ENCODE measurements at regions of chr12 and their contacts with region 1.

Region 1: DNA sequence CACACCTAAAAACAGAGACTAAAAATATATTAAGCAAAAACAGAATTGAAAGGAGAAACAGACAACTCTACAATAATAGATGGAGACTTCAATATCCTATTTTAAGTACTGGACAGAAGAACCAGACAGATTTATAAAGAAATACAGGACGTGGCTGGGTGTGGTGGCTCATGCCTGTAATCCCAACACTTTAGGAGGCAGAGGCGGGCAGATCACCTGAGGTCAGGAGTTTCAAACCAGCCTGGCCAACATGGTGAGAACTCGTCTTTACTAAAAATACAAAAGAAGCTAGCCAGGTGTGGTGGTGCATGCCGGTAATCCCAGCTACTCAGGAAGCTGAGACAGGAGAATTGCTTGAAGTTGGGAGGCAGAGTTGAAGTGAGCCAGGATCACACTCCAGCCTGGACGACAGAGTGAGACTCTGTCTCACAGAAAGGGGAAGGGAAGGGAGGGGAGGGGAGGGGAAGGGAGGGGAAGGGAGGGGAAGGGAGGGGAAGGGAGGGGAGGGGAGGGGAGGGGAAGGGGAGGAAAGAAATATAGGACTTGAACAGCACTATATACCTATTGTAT is 53.0 kb downstream of the CDK17 start:
- DNase-seq: no peak
- H3K4me3 Mint-ChIP-seq: peak overlapping the region; percentile 47
- H3K27ac Mint-ChIP-seq: peak overlapping the region; percentile 69
- H3K4me1 Mint-ChIP-seq: peaks cover 55% of the 10 kb centered on the region
- H3K27me3 Mint-ChIP-seq: no peaks in the 10 kb centered on the region

Region 2: GRCh38 chr12:95739561-95740313 is 607.5 kb before region 1 on chr12:
- CTCF ChIA-PET with region 1: no interaction called
- intact Hi-C with region 1: no loop called
- DNase-seq: no peak
- H3K4me3 Mint-ChIP-seq: no peak overlapping the region
- H3K27ac Mint-ChIP-seq: no peak overlapping the region
- H3K4me1 Mint-ChIP-seq: no peaks in the 10 kb centered on the region
- H3K27me3 Mint-ChIP-seq: peaks cover 3% of the 10 kb centered on the region

Region 3: DNA sequence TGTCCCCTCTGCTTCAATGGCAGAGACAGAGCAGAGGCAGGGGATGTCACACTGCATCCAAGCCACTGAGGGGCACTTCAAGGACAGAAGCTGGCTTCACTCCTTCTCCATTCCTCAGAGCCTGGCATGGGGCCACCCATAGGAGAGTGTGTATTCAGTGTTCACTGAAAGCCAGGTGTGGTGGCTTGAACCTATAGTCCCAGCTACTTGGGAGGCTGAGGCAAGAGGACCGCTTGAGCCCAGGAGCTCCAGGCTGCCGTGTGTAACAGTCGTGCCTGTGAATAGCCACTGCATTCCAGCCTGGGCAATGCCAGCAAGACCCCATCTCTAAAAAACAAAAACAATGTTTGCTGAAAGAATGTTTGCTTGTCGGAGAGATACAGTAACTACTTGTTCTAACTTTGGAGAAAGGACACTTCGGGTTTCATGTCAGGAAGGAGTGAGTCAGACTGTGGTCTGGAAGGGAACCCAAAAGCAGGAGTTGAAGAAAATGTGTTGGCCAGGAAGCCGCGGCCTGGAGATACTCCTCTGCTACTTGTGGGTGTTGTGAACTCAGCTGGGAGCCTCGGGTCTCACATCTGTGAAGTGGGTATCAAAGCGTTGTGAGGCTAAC is 109.6 kb before region 1 on chr12:
- CTCF ChIA-PET with region 1: no interaction called
- intact Hi-C with region 1: no loop called
- DNase-seq: peak; percentile 75
- H3K4me3 Mint-ChIP-seq: no peak overlapping the region
- H3K27ac Mint-ChIP-seq: peak overlapping the region; percentile 47
- H3K4me1 Mint-ChIP-seq: peaks cover 66% of the 10 kb centered on the region
- H3K27me3 Mint-ChIP-seq: no peaks in the 10 kb centered on the region

Region 4: DNA sequence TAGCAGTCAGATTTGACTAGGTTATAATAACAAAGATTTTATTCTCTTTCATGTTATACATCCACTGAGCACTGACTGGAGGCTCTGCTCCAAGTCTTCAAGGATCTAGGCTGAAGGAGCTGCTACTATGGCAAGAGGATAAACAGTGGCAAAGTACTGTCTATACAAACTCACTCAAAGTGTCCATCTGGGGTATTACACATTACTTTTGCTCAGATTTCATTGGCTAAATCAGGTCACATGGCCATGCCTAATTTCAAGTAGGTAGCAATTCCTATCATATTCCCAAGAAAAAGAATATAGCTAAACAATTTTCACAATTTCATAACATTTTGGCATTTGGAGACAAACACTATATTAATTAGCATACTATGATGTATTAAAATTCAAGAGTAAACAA is 12.1 kb after region 1 on chr12:
- CTCF ChIA-PET with region 1: interaction called, 3 read pairs
- intact Hi-C with region 1: loop called (anchors 1 kb)
- DNase-seq: no peak
- H3K4me3 Mint-ChIP-seq: no peak overlapping the region
- H3K27ac Mint-ChIP-seq: no peak overlapping the region
- H3K4me1 Mint-ChIP-seq: peaks cover 75% of the 10 kb centered on the region
- H3K27me3 Mint-ChIP-seq: no peaks in the 10 kb centered on the region